Cardiac septum (tissue), 1 donor: ENCODE measurements at regions of chr1 and their contacts with region 1.

Region 1: DNA sequence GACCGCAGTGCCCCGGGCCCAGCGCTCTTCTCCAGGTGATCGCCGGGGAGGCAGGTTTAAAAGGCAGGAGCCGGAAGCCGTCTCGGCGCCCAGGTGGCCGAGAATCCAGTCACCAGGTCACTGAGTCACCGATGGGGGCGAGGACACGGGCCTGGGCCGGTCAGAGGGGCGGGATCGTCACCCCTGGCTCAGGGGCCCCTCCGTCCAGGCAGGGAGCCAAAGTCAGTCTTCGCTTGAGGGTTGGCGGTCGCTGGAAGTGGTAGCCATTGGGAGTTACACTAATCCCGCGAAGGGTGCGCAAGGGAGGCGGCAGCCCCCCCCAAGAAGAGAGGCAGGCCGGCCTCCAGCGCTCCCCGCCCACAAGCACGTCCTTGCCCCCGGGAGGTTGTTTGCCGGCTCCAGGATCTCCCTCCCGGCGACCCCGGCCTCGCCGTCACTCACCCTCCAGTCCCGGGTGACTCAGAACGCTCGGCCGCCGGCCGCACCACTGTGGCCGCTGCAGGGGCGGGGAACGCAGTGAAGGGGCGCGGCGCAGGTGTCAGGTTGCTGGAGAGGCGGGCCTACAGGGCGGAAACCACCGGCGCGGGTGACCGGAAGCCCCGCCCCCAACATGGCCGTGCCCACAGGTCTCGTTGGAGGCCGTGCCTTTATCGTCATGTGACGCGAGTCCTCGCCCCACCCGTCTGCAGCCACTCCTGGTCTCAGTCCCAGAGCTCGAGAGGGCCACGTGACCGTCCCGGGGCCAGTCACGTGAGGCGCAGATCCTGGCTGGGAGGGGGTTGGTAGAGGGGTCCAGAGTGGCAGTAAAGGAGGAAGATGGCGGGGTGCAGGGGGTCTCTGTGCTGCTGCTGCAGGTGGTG is at the starts of genes CLCN6 and MTHFR:
- DNase-seq: peak; percentile 100
- total RNA-seq, gene CLCN6: 26.3 TPM
- total RNA-seq, gene MTHFR: 33.7 TPM

Region 2: GRCh38 chr1:11735854-11736745 is 69.6 kb before region 1 on chr1 and contains the start of gene AGTRAP:
- intact Hi-C with region 1: loop called (anchors 5 kb)
- DNase-seq: peak; percentile 99
- total RNA-seq, gene AGTRAP: 17.4 TPM

Region 3: GRCh38 chr1:11761988-11762406 is 43.7 kb before region 1 on chr1 and contains the start of gene C1orf167:
- intact Hi-C with region 1: no loop called
- DNase-seq: no peak
- total RNA-seq, gene C1orf167: 2.3 TPM

Region 4: GRCh38 chr1:11784993-11785769 is 20.5 kb before region 1 on chr1:
- intact Hi-C with region 1: loop called (anchors 1 kb)
- DNase-seq: peak; percentile 90

Region 5: GRCh38 chr1:11790880-11791715 is 14.6 kb before region 1 on chr1:
- intact Hi-C with region 1: loop called (anchors 1 kb)
- DNase-seq: peak; percentile 94